CD14-positive monocyte (primary cell): ENCODE measurements at regions of chr6 and their contacts with region 1.

Region 1: DNA sequence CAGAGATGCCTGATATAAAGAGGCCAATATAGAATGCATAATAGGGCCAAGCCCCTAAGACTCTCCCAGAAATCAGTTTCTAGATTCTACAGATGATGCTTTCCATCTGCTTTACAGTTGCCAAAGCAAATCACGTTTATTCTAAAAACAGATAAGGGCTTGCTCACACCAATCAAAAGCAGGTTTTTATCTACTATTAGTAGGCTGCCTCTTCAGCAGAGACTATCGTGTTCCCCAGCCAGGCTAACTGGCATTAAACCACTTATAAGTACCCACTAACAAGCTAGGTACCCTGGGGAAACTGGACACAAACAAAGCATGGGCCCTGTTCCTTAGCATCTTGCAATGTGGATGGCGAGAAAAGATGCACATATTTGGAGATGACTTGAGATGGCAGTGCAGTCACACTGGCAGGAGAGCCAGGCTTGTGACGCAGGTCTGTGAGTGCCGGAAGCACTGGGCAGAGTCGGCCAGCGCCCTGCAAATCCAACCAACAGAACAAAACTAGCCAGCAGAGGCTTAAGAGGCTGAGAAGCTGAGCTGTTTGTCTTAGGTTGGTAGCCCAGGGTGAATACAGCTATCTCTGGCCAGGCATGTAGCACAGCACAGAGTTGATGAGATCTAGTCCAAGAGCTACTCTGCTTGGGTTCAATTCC is 73.4 kb downstream of the GFOD1 start:
- DNase-seq: peak in 2 of 3 donors; percentile 43 to 50
- H3K4me3 ChIP-seq: no peak overlapping the region
- H3K4me3 Mint-ChIP-seq: no peak overlapping the region
- H3K27ac ChIP-seq: peak overlapping the region in 1 of 2 donors; percentile 63
- H3K27ac Mint-ChIP-seq: peak overlapping the region in 4 of 7 donors; percentile 26 to 74 (median 48)
- H3K4me1 ChIP-seq: peaks cover 34 to 41% of the 10 kb centered on the region in 2 donors
- H3K4me1 Mint-ChIP-seq: peaks cover 42% of the 10 kb centered on the region
- H3K27me3 ChIP-seq: no peaks in the 10 kb centered on the region
- H3K27me3 Mint-ChIP-seq: peaks cover 0 to 7% (median 2%) of the 10 kb centered on the region in 3 donors
- CTCF ChIP-seq: no peak

Region 2: DNA sequence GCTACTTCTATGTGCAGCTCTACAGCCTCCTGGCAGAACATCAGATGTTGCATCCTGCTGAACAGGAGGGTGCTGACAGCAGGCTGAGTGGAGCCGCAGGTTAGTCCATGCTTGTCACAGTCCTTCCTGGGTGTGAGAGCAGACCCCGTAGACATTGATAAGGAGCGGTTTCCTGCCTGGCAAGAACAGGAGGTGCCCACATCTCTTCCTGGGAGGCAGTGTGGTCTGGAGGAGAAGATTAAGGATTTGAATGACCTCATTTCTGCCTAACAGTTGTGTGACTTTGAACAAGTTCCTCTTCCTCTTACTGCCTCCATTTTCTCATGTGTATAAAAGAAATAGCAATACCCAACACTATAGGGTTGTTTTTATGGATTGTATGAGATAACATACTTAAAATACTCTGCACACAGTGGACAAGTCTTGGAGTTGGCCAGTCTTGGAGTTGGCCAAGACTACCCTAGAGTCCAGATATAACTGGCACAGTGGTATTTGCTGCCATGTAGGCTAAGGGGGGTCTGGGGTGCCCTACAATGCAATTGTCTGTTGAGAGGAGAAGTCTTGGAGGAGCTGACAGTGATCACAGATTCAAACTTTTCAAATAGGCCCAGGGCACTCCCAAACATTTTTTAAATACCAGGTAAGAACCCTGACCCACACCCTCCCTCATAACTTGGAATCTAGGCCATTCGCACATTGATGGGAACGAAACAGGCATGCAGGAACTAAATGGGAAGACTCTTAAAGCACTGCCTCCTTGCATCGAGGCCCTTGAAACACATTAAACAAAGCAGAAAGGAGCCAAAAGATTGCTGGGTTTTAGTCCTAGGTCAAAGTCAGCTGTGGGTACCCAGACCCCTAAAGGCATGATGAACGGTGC is 53.1 kb before region 1 on chr6:
- intact Hi-C with region 1: no loop called
- DNase-seq: peak; percentile 9 to 35 (median 24)
- H3K4me3 ChIP-seq: no peak overlapping the region
- H3K4me3 Mint-ChIP-seq: peak overlapping the region in 1 of 2 donors; percentile 67
- H3K27ac ChIP-seq: peak overlapping the region in 1 of 2 donors; percentile 42
- H3K27ac Mint-ChIP-seq: peak overlapping the region in 4 of 7 donors; percentile 41 to 78 (median 63)
- H3K4me1 ChIP-seq: peaks cover 13 to 16% of the 10 kb centered on the region in 2 donors
- H3K4me1 Mint-ChIP-seq: peaks cover 24% of the 10 kb centered on the region
- H3K27me3 ChIP-seq: no peaks in the 10 kb centered on the region
- H3K27me3 Mint-ChIP-seq: no peaks in the 10 kb centered on the region
- CTCF ChIP-seq: no peak

Region 3: GRCh38 chr6:13454286-13455221 is 40.5 kb after region 1 on chr6:
- intact Hi-C with region 1: loop called (anchors 5 to 10 kb)
- DNase-seq: peak; percentile 89 to 95 (median 94)
- H3K4me3 ChIP-seq: peak overlapping the region in 1 of 3 experiments; percentile 11
- H3K4me3 Mint-ChIP-seq: peak overlapping the region; percentile 61 to 72
- H3K27ac ChIP-seq: peak overlapping the region; percentile 71 to 83
- H3K27ac Mint-ChIP-seq: peak overlapping the region; percentile 89 to 99 (median 92)
- H3K4me1 ChIP-seq: peaks cover 19 to 20% of the 10 kb centered on the region in 2 donors
- H3K4me1 Mint-ChIP-seq: peaks cover 23% of the 10 kb centered on the region
- H3K27me3 ChIP-seq: no peaks in the 10 kb centered on the region
- H3K27me3 Mint-ChIP-seq: peaks cover 2% of the 10 kb centered on the region in 3 donors
- CTCF ChIP-seq: no peak

Region 4: GRCh38 chr6:13711733-13712598 is 297.9 kb after region 1 on chr6 and contains the start of gene RANBP9:
- intact Hi-C with region 1: loop called in 1 of 2 experiments (anchors 10 kb)
- DNase-seq: peak; percentile 53 to 67 (median 65)
- H3K4me3 ChIP-seq: peak within 1 kb of the TSS; percentile 67 to 95 (median 85)
- H3K4me3 Mint-ChIP-seq: peak within 1 kb of the TSS; percentile 97 to 99
- H3K27ac ChIP-seq: peak within 1 kb of the TSS; percentile 86 to 92
- H3K27ac Mint-ChIP-seq: peak within 1 kb of the TSS; percentile 90 to 96 (median 94)
- H3K4me1 ChIP-seq: peaks cover 39 to 54% of the 10 kb centered on the region in 2 donors
- H3K4me1 Mint-ChIP-seq: peaks cover 56% of the 10 kb centered on the region
- H3K27me3 ChIP-seq: no peaks in the 10 kb centered on the region
- H3K27me3 Mint-ChIP-seq: peaks cover 0 to 2% (median 0%) of the 10 kb centered on the region in 3 donors
- CTCF ChIP-seq: no peak
- polyA plus RNA-seq, gene RANBP9: 1.8 to 26.1 (median 2.0) TPM